Lower leg skin (tissue), 4 donors: ENCODE measurements at regions of chr6 and their contacts with region 1.

Region 1: DNA sequence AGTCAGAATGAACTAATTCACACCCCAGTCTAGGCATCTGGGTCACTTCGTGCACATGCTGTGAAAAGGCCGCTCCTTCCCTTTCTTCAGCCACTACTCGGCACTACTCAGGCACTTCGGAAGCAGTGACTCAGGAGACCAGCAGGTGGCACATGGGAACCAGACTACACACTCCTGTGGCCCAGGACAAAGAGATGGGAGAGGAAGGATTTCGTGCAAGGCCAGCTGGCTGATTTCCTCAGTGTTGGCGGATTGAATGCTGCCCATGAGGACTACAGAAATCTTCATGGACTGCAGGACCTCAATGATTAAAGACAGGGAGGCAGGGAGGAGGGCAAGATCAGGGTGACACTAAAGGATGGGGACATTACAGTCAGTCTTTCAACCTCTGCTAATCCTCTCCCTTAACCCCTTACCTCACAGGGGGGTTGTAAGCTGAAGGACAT is 117.8 kb upstream of the SPACA1 start:
- DNase-seq: peak; percentile 76 to 93
- H3K4me3 ChIP-seq: no peak overlapping the region
- CTCF ChIP-seq: peak in 1 of 3 donors; percentile 19
- POLR2A ChIP-seq: no peak

Region 2: GRCh38 chr6:88141561-88142296 is 211.9 kb after region 1 on chr6:
- intact Hi-C with region 1: no loop called
- DNase-seq: no peak
- H3K4me3 ChIP-seq: no peak overlapping the region
- CTCF ChIP-seq: no peak
- POLR2A ChIP-seq: no peak

Region 3: GRCh38 chr6:88867841-88868731 is 938.2 kb after region 1 on chr6:
- intact Hi-C with region 1: loop called (anchors 5 kb)
- DNase-seq: no peak
- H3K4me3 ChIP-seq: no peak overlapping the region
- CTCF ChIP-seq: no peak
- POLR2A ChIP-seq: no peak